ENCODE measurements at regions of chr19 and their contacts with region 1.

Region 1: GRCh38 chr19:9945319-9945966 is 9.1 kb upstream of the OLFM2 start:
- DNase-seq: peak; percentile 86 to 89
- ATAC-seq: peak; percentile 94 to 98 (median 96)
- H3K4me3 ChIP-seq: no peak overlapping the region
- H3K27ac ChIP-seq: peak overlapping the region; percentile 44 to 79 (median 62)
- H3K4me1 ChIP-seq: peaks cover 0 to 24% (median 5%) of the 10 kb centered on the region in 9 donors
- H3K27me3 ChIP-seq: peaks cover 0 to 31% (median 9%) of the 10 kb centered on the region in 7 donors
- CTCF ChIP-seq: peak in 4 of 9 donors; percentile 12 to 49 (median 34)

Region 2: GRCh38 chr19:9865732-9866501 is 79.5 kb before region 1 on chr19:
- intact Hi-C with region 1: no loop called
- DNase-seq: no peak
- ATAC-seq: no peak
- H3K4me3 ChIP-seq: no peak overlapping the region
- H3K27ac ChIP-seq: no peak overlapping the region
- H3K4me1 ChIP-seq: no peaks in the 10 kb centered on the region
- H3K27me3 ChIP-seq: peaks cover 0 to 4% (median 0%) of the 10 kb centered on the region in 7 donors
- CTCF ChIP-seq: no peak

Region 3: GRCh38 chr19:10000171-10000826 is 54.9 kb after region 1 on chr19:
- intact Hi-C with region 1: loop called in 1 of 10 experiments (anchors 10 kb)
- DNase-seq: peak; percentile 47 to 51
- ATAC-seq: peak in 2 of 8 donors; percentile 19 to 25
- H3K4me3 ChIP-seq: no peak overlapping the region
- H3K27ac ChIP-seq: peak overlapping the region in 2 of 10 donors; percentile 33 to 44
- H3K4me1 ChIP-seq: peaks cover 0 to 28% (median 0%) of the 10 kb centered on the region in 9 donors
- H3K27me3 ChIP-seq: peaks cover 0 to 30% (median 10%) of the 10 kb centered on the region in 7 donors
- CTCF ChIP-seq: peak; percentile 32 to 76 (median 66)

Region 4: DNA sequence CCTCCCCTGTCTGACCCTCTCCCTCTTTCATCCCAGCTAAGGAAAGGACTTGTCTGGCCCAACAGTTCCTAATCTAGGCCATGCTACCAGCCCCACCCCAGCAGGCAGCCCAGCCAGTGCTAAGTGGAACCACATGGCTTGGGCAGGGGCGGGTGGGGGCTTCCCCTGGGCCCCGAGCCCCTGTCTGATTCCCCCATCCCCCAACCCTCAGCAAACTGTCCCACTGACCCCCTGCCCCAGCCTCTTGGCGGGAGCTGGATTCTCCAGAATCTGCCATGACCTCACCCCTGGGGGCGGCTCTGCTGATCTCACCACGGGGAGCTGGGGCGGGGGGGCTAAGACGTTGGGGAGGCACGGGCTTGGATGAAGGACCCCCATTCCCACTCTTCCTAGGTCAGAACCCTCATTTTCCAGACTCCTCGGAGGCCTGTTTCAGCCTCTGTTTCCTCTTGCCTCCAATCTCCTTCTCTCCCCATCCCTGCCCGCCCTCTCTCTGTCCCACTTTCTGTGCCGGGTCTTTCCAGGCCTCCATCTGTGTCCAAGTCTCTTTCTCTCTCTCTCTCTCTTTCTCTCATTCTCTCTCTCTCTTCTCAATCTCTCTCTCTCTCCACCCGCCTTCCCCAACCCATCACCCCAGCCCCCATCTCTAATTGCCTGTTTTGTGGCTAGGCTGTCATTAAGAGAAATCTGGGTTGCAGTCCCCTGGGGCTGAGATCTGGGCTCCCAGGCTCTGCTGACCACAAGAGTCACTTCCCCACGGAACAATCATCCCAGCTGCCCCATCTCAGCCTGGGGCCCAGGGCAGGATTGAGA is 62.1 kb after region 1 on chr19:
- intact Hi-C with region 1: loop called in 2 of 10 experiments (anchors 2 to 10 kb)
- DNase-seq: peak; percentile 66 to 69
- ATAC-seq: peak; percentile 23 to 54 (median 34)
- H3K4me3 ChIP-seq: peak overlapping the region in 6 of 10 donors; percentile 10 to 34 (median 26)
- H3K27ac ChIP-seq: peak overlapping the region; percentile 44 to 87 (median 81)
- H3K4me1 ChIP-seq: peaks cover 3 to 61% (median 22%) of the 10 kb centered on the region in 9 donors
- H3K27me3 ChIP-seq: peaks cover 0 to 83% (median 65%) of the 10 kb centered on the region in 7 donors
- CTCF ChIP-seq: no peak

Measured in heart right ventricle (tissue), 16 donors.